Posterior vena cava (tissue), 2 donors: ENCODE measurements at regions of chr2 and their contacts with region 1.

Region 1: GRCh38 chr2:121071034-121071504 is 213.9 kb downstream of the TFCP2L1 start:
- DNase-seq: peak; percentile 92

Region 2: GRCh38 chr2:120697471-120697870 is 373.6 kb before region 1 on chr2:
- intact Hi-C with region 1: loop called (anchors 2 kb)
- DNase-seq: no peak

Region 3: GRCh38 chr2:120712180-120712681 is 358.8 kb before region 1 on chr2:
- intact Hi-C with region 1: loop called in 1 of 2 experiments (anchors 5 kb)
- DNase-seq: no peak